Upper lobe of right lung (tissue), 1 donor: ENCODE measurements at regions of chr15 and their contacts with region 1.

Region 1: GRCh38 chr15:66619151-66619903 is 53.5 kb upstream of the LCTL start:
- DNase-seq: peak; percentile 86
- ATAC-seq: peak; percentile 83
- H3K4me3 ChIP-seq: no peak overlapping the region
- H3K27ac ChIP-seq: peak overlapping the region; percentile 38
- H3K4me1 ChIP-seq: peaks cover 60% of the 10 kb centered on the region
- H3K27me3 ChIP-seq: no peaks in the 10 kb centered on the region
- CTCF ChIP-seq: peak; percentile 89

Region 2: GRCh38 chr15:66700802-66701421 is 81.6 kb after region 1 on chr15:
- intact Hi-C with region 1: loop called (anchors 10 kb)
- DNase-seq: peak; percentile 98
- ATAC-seq: peak; percentile 87
- H3K4me3 ChIP-seq: peak overlapping the region; percentile 60
- H3K27ac ChIP-seq: peak overlapping the region; percentile 85
- H3K4me1 ChIP-seq: peaks cover 31% of the 10 kb centered on the region
- H3K27me3 ChIP-seq: no peaks in the 10 kb centered on the region
- CTCF ChIP-seq: no peak

Region 3: DNA sequence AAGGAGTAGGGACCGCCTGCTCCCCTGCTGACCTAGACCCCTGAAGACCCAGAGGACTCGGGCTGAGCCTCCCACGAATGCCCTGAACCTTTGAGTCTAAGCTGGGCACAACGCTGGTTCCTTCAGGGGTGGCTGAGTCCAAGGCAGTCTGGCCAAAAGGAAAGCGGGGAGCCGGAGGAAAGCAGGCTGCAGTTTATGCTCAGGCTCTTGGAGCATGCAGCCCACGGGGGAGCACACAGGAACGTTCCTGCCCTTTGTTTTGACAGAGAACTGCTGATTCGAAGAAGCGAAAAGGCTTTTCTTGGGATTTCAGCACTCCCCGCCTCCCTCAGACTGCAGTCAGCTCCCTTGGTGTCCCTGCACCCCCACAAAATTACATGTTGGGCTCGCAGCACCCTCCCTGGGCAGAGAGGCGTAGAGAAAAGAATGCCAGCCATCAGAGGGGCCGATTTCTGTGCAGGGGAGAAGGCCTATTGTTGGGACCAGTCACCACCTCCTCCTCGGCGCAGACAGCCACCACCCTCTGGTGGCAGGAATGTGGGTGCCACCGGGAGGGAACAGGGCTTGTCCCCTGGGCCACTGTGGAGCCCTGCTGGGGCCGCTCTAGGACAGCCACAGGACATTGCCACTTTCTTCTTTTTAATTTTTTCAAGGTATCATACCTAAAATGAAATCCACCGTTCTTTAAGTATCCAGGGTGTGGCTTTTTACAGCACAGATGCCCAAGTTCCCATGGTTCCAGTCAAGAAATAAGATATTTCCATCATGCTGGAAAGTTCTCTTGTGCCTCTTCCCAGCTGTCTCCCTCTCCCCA is 154.9 kb after region 1 on chr15:
- intact Hi-C with region 1: loop called (anchors 10 kb)
- DNase-seq: peak; percentile 93
- ATAC-seq: peak; percentile 95
- H3K4me3 ChIP-seq: no peak overlapping the region
- H3K27ac ChIP-seq: peak overlapping the region; percentile 51
- H3K4me1 ChIP-seq: peaks cover 52% of the 10 kb centered on the region
- H3K27me3 ChIP-seq: no peaks in the 10 kb centered on the region
- CTCF ChIP-seq: peak; percentile 96